Caki2 (cell line): ENCODE measurements at regions of chr9 and their contacts with region 1.

Region 1: DNA sequence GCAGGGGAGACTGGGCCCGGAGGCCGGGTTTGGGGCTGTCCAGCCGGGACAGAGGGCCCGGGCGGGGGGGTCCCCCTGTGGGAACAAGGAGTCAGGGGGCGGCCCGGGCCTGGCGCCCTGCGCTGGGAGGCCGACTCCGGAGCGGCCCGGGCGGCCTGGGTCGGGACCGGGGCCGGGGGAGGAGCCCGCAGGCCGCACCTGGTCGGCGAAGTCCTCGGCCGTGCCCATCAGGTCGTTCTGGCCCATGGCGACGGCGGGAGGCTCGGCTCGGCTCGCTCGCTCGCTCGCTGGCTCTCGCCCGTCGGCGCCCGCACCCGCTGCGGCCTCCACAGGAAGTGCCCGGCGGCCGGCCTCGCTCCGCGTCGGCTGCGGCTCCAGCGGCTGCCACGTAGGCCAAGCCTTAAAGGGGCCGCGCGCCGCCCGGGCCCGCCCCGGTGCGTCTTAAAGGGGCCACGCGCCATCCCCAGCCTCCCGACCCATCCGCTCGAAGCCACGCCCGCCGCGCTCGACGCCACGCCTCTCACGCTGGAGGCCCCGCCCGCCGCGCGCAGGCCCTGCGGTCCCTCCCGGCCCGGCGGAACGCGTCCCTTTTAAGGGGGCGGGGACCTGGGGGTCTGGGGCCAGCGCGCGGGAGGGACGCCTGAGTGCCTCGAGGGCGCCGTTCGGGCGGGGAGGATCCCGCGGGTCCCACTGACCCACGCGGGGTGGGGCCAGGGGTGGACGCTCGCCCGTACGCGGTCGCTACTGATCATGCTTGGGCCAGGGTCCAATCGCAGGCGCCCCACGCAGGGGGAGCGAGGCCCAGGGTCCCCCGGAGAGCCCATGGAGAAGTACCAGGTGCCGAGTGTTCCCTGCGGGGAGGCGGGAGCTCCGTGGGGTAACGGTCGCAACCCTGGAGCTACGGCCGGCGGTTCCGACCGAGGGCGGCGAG is at the starts of genes STKLD1 and SURF4:
- DNase-seq: peak; percentile 93
- total RNA-seq, gene STKLD1: 0.17 TPM in 1 of 2 replicates, not detected in the other
- total RNA-seq, gene SURF4: 370 and 393 TPM in 2 replicates

Region 2: DNA sequence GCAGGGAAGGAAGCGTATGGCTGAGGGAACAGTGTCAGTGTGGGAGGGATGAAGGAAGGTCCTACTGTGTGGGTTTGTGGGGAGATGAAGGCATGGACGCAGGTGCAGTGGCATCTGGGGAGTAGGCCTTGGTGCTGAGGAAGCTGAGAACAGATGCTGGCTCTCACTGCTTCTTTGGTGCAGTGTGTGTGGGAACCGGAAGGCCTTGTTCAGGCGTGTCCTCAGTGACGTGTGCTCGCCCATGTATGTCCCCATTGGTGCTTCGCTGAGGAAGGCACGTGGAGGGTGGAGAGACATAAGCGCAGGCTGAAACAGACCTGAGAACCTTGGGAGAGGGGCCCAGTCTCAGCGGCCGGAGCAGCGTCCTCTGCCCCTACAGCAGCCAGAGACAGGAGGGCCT is 64.9 kb after region 1 on chr9:
- in situ Hi-C with region 1: no loop called
- DNase-seq: no peak

Region 3: GRCh38 chr9:133467101-133467500 is 91.1 kb after region 1 on chr9:
- in situ Hi-C with region 1: loop called (anchors 5 kb)
- DNase-seq: no peak

Region 4: GRCh38 chr9:133640580-133641395 is 264.8 kb after region 1 on chr9:
- in situ Hi-C with region 1: no loop called
- DNase-seq: no peak